PC-9 (cell line): ENCODE measurements at regions of chr15 and their contacts with region 1.

Region 1: GRCh38 chr15:57675481-57676181 is 30.9 kb upstream of the POLR2M start:
- DNase-seq: peak; percentile 32 to 88
- H3K4me3 ChIP-seq: no peak overlapping the region
- H3K27ac ChIP-seq: peak overlapping the region; percentile 24; the same call in 1 of the 2 replicates
- H3K4me1 ChIP-seq: peaks cover 17% of the 10 kb centered on the region
- H3K27me3 ChIP-seq: no peaks in the 10 kb centered on the region
- CTCF ChIP-seq: no peak

Region 2: GRCh38 chr15:57654153-57654852 is 21.3 kb before region 1 on chr15:
- CTCF ChIA-PET with region 1: no interaction called
- POLR2A ChIA-PET with region 1: no interaction called
- intact Hi-C with region 1: no loop called
- DNase-seq: no peak
- H3K4me3 ChIP-seq: no peak overlapping the region
- H3K27ac ChIP-seq: no peak overlapping the region
- H3K4me1 ChIP-seq: no peaks in the 10 kb centered on the region
- H3K27me3 ChIP-seq: no peaks in the 10 kb centered on the region
- CTCF ChIP-seq: no peak

Region 3: GRCh38 chr15:57706405-57707209 is 31.0 kb after region 1 on chr15 and contains the start of gene POLR2M:
- CTCF ChIA-PET with region 1: no interaction called
- POLR2A ChIA-PET with region 1: interaction called, 5 read pairs
- intact Hi-C with region 1: loop called (anchors 1 kb)
- DNase-seq: peak; percentile 84 to 85
- H3K4me3 ChIP-seq: peak within 1 kb of the TSS; percentile 74
- H3K27ac ChIP-seq: peak within 1 kb of the TSS; percentile 74
- H3K4me1 ChIP-seq: peaks cover 15% of the 10 kb centered on the region
- H3K27me3 ChIP-seq: no peaks in the 10 kb centered on the region
- CTCF ChIP-seq: no peak
- total RNA-seq, gene POLR2M: 53.9 and 56.8 TPM in 2 replicates